ENCODE measurements at regions of chr9 and their contacts with region 1.

Region 1: GRCh38 chr9:130128733-130129431 is 43.3 kb upstream of the NCS1 start:
- DNase-seq: peak; percentile 63 to 85
- ATAC-seq: peak; percentile 76 to 88 (median 77)
- H3K4me3 ChIP-seq: peak overlapping the region; percentile 1
- H3K4me3 Mint-ChIP-seq: peak overlapping the region; percentile 91
- H3K27ac ChIP-seq: peak overlapping the region; percentile 97
- H3K27ac Mint-ChIP-seq: peak overlapping the region; percentile 96 to 100
- H3K4me1 ChIP-seq: peaks cover 65% of the 10 kb centered on the region
- H3K4me1 Mint-ChIP-seq: peaks cover 64 to 70% of the 10 kb centered on the region in 2 donors
- H3K27me3 ChIP-seq: no peaks in the 10 kb centered on the region
- H3K27me3 Mint-ChIP-seq: no peaks in the 10 kb centered on the region
- CTCF ChIP-seq: no peak

Region 2: GRCh38 chr9:129868916-129869486 is 259.9 kb before region 1 on chr9:
- intact Hi-C with region 1: loop called (anchors 5 kb)
- DNase-seq: peak; percentile 85 to 96
- ATAC-seq: peak; percentile 87 to 93 (median 92)
- H3K4me3 ChIP-seq: peak overlapping the region; percentile 5
- H3K4me3 Mint-ChIP-seq: peak overlapping the region; percentile 65
- H3K27ac ChIP-seq: peak overlapping the region; percentile 85
- H3K27ac Mint-ChIP-seq: peak overlapping the region; percentile 85 to 92
- H3K4me1 ChIP-seq: peaks cover 51% of the 10 kb centered on the region
- H3K4me1 Mint-ChIP-seq: peaks cover 50 to 57% of the 10 kb centered on the region in 2 donors
- H3K27me3 ChIP-seq: no peaks in the 10 kb centered on the region
- H3K27me3 Mint-ChIP-seq: no peaks in the 10 kb centered on the region
- CTCF ChIP-seq: no peak

Region 3: GRCh38 chr9:129884220-129885017 is 244.5 kb before region 1 on chr9:
- intact Hi-C with region 1: loop called (anchors 1 kb)
- DNase-seq: peak; percentile 90 to 99
- ATAC-seq: peak; percentile 60 to 81 (median 60)
- H3K4me3 ChIP-seq: peak overlapping the region; percentile 65
- H3K4me3 Mint-ChIP-seq: peak overlapping the region; percentile 86
- H3K27ac ChIP-seq: peak overlapping the region; percentile 98
- H3K27ac Mint-ChIP-seq: peak overlapping the region; percentile 98 to 99
- H3K4me1 ChIP-seq: peaks cover 61% of the 10 kb centered on the region
- H3K4me1 Mint-ChIP-seq: peaks cover 46 to 55% of the 10 kb centered on the region in 2 donors
- H3K27me3 ChIP-seq: no peaks in the 10 kb centered on the region
- H3K27me3 Mint-ChIP-seq: no peaks in the 10 kb centered on the region
- CTCF ChIP-seq: no peak

Region 4: GRCh38 chr9:129944506-129945116 is 184.3 kb before region 1 on chr9:
- intact Hi-C with region 1: loop called (anchors 10 kb)
- DNase-seq: peak; percentile 37 to 87
- ATAC-seq: peak; percentile 91 to 94 (median 93)
- H3K4me3 ChIP-seq: no peak overlapping the region
- H3K4me3 Mint-ChIP-seq: peak overlapping the region; percentile 71
- H3K27ac ChIP-seq: peak overlapping the region; percentile 92
- H3K27ac Mint-ChIP-seq: peak overlapping the region; percentile 81 to 93
- H3K4me1 ChIP-seq: peaks cover 30% of the 10 kb centered on the region
- H3K4me1 Mint-ChIP-seq: peaks cover 47 to 52% of the 10 kb centered on the region in 2 donors
- H3K27me3 ChIP-seq: no peaks in the 10 kb centered on the region
- H3K27me3 Mint-ChIP-seq: no peaks in the 10 kb centered on the region
- CTCF ChIP-seq: no peak

Region 5: GRCh38 chr9:129962889-129963703 is 165.8 kb before region 1 on chr9:
- intact Hi-C with region 1: loop called (anchors 5 kb)
- DNase-seq: peak; percentile 52 to 93
- ATAC-seq: peak; percentile 96 to 97 (median 97)
- H3K4me3 ChIP-seq: peak overlapping the region; percentile 48
- H3K4me3 Mint-ChIP-seq: peak overlapping the region; percentile 91
- H3K27ac ChIP-seq: peak overlapping the region; percentile 95
- H3K27ac Mint-ChIP-seq: peak overlapping the region; percentile 95 to 98
- H3K4me1 ChIP-seq: peaks cover 28% of the 10 kb centered on the region
- H3K4me1 Mint-ChIP-seq: peaks cover 54 to 65% of the 10 kb centered on the region in 2 donors
- H3K27me3 ChIP-seq: no peaks in the 10 kb centered on the region
- H3K27me3 Mint-ChIP-seq: no peaks in the 10 kb centered on the region
- CTCF ChIP-seq: no peak

Region 6: GRCh38 chr9:130107234-130107861 is 21.5 kb before region 1 on chr9:
- intact Hi-C with region 1: loop called (anchors 1 kb)
- DNase-seq: peak; percentile 80 to 94
- ATAC-seq: peak; percentile 76 to 87 (median 82)
- H3K4me3 ChIP-seq: no peak overlapping the region
- H3K4me3 Mint-ChIP-seq: peak overlapping the region; percentile 73
- H3K27ac ChIP-seq: no peak overlapping the region
- H3K27ac Mint-ChIP-seq: peak overlapping the region; percentile 85 to 89
- H3K4me1 ChIP-seq: peaks cover 23% of the 10 kb centered on the region
- H3K4me1 Mint-ChIP-seq: peaks cover 27 to 42% of the 10 kb centered on the region in 2 donors
- H3K27me3 ChIP-seq: no peaks in the 10 kb centered on the region
- H3K27me3 Mint-ChIP-seq: no peaks in the 10 kb centered on the region
- CTCF ChIP-seq: peak; percentile 90

Region 7: DNA sequence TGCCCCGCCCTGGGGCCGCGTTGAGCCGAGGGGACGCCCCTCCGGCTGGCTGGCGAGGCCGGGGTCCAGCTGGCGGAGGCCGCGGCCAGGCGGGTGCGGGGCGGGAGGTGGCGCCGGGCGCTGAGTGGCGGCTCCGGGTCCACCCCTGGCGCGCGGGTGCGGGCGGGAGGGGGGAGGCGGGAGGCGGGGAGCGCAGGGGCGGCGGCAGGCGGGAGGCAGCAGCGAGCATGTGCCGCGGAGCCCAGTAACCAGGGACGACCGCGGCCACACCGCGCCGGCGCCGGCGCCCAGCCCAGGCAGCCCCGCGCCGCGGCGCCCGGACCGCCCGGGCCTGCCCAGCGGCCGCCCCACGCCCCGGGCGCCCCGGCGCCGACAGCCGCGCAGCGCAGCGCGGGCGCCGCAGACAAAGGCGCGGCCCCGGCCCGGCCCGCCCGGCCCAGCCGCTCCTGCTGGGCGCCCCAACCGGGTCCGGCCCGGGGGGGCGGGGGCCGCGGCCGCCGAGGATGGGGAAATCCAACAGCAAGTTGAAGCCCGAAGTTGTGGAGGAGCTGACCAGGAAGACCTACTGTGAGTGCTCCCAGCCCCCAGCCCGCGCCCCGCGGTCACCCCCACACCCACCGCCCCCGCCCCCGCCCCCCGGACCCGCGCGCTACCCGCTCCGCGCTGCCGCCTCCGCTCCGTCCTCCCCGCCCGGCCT is 43.4 kb after region 1 on chr9 and contains the start of gene NCS1:
- intact Hi-C with region 1: loop called (anchors 5 kb)
- DNase-seq: peak; percentile 41 to 60
- ATAC-seq: peak; percentile 61 to 74 (median 68)
- H3K4me3 ChIP-seq: peak within 1 kb of the TSS; percentile 23
- H3K4me3 Mint-ChIP-seq: peak within 1 kb of the TSS; percentile 83
- H3K27ac ChIP-seq: no peak within 1 kb of the TSS
- H3K27ac Mint-ChIP-seq: peak within 1 kb of the TSS in 1 of 2 donors; percentile 72
- H3K4me1 ChIP-seq: peaks cover 15% of the 10 kb centered on the region
- H3K4me1 Mint-ChIP-seq: peaks cover 1 to 15% of the 10 kb centered on the region in 2 donors
- H3K27me3 ChIP-seq: peaks cover 10% of the 10 kb centered on the region
- H3K27me3 Mint-ChIP-seq: no peaks in the 10 kb centered on the region
- CTCF ChIP-seq: no peak
- total RNA-seq, gene NCS1: 1.4 to 2.4 (median 1.5) TPM

Measured in natural killer cell (primary cell).